AG04450 (cell line): ENCODE measurements at regions of chr10 and their contacts with region 1.

Region 1: GRCh38 chr10:112307358-112308124 is 24.3 kb downstream of the TECTB start:
- DNase-seq: peak; percentile 10
- H3K4me3 ChIP-seq: no peak overlapping the region
- H3K27ac ChIP-seq: no peak overlapping the region
- H3K27me3 ChIP-seq: peaks cover 5% of the 10 kb centered on the region
- CTCF ChIP-seq: peak; percentile 88

Region 2: DNA sequence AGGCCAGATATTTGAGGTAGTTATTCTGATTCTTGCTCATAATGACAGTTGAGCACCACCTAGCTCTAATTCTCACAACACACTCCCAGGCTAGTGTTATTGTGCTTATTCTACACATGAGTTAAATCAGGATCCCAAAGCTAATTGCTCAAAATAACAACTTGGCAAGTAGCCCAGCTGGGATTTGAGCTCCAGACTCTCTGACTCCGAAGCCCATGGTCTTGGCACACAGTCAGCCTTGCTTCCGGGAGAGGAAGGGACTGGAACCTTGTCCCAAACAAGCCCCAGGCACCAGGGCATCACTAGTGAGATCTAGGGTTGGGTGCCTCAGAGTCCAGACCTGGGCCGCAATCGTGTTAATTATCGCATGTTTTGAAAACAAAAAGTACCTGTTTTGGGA is 225.4 kb before region 1 on chr10:
- CTCF ChIA-PET with region 1: no interaction called
- POLR2A ChIA-PET with region 1: no interaction called
- DNase-seq: no peak
- H3K4me3 ChIP-seq: no peak overlapping the region
- H3K27ac ChIP-seq: no peak overlapping the region
- H3K27me3 ChIP-seq: no peaks in the 10 kb centered on the region
- CTCF ChIP-seq: no peak

Region 3: GRCh38 chr10:112115799-112116385 is 191.6 kb before region 1 on chr10:
- CTCF ChIA-PET with region 1: interaction called, 11 read pairs
- POLR2A ChIA-PET with region 1: no interaction called
- DNase-seq: no peak
- H3K4me3 ChIP-seq: no peak overlapping the region
- H3K27ac ChIP-seq: no peak overlapping the region
- H3K27me3 ChIP-seq: peaks cover 4% of the 10 kb centered on the region
- CTCF ChIP-seq: peak; percentile 74

Region 4: GRCh38 chr10:112177247-112177646 is 130.3 kb before region 1 on chr10:
- CTCF ChIA-PET with region 1: interaction called, 49 read pairs
- POLR2A ChIA-PET with region 1: no interaction called
- DNase-seq: no peak
- H3K4me3 ChIP-seq: no peak overlapping the region
- H3K27ac ChIP-seq: no peak overlapping the region
- H3K27me3 ChIP-seq: no peaks in the 10 kb centered on the region
- CTCF ChIP-seq: no peak

Region 5: GRCh38 chr10:112183329-112184051 is 124.1 kb before region 1 on chr10 and contains the start of gene GPAM:
- CTCF ChIA-PET with region 1: interaction called, 49 read pairs
- POLR2A ChIA-PET with region 1: interaction called, 4 read pairs
- DNase-seq: peak; percentile 77
- H3K4me3 ChIP-seq: peak within 1 kb of the TSS; percentile 95
- H3K27ac ChIP-seq: peak within 1 kb of the TSS; percentile 83
- H3K27me3 ChIP-seq: no peaks in the 10 kb centered on the region
- CTCF ChIP-seq: no peak
- polyA plus RNA-seq, gene GPAM: 7.2 and 10.6 TPM in 2 replicates

Region 6: DNA sequence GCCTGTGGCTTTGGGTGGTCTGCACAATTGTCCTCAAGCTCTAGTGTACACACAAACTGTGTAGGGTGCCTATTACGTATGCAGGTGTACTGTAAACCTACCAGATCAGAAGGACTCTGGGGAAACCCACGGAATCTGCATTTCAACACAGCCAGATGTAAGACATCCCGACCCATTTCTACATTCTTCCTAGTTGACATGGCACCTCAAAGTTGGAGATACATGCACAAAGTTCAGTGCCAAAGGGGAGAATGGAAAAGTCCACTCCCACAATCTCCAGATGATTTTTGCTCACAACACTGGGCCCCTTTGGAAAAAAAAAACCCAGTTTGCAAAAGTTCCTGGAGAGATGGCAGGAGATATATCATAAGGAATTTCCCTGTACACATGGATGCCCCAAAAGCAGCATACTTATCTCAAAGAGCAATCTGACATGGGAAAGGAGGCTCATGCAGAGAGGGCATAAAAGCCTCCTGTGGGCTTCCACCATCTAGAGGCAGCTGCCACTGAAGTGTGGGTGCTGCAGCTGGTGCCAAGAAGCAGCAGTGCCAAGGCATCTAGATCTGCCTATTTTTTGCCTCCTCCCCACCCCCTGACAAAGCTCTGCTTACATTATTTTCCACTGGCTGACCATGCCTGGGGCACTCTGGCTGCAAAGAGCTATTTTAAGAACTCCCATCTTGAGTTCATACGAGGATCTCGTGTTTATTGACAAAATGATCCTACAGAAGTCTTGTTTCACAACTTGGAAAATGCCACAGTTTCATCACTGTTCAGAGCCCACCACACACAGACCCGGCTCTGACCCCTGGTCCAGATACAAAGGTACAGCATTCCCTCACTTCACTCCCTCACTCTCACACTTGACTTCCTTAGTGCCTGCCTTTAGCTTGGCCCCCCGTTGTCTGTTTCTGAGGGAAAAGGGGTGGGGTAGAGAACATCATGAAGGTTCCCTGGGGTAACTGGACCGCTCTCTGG is 11.4 kb before region 1 on chr10:
- CTCF ChIA-PET with region 1: interaction called, 13 read pairs
- POLR2A ChIA-PET with region 1: no interaction called
- DNase-seq: no peak
- H3K4me3 ChIP-seq: no peak overlapping the region
- H3K27ac ChIP-seq: peak overlapping the region; percentile 57
- H3K27me3 ChIP-seq: no peaks in the 10 kb centered on the region
- CTCF ChIP-seq: no peak

Region 7: GRCh38 chr10:112601214-112602090 is 293.9 kb after region 1 on chr10:
- CTCF ChIA-PET with region 1: no interaction called
- POLR2A ChIA-PET with region 1: no interaction called
- DNase-seq: no peak
- H3K4me3 ChIP-seq: no peak overlapping the region
- H3K27ac ChIP-seq: no peak overlapping the region
- H3K27me3 ChIP-seq: no peaks in the 10 kb centered on the region
- CTCF ChIP-seq: no peak